ENCODE measurements at regions of chr2 and their contacts with region 1.

Region 1: GRCh38 chr2:171522052-171522787 is at the start of gene CYBRD1:
- DNase-seq: peak; percentile 93
- ATAC-seq: peak; percentile 88
- total RNA-seq, gene CYBRD1: 58.3 TPM

Region 2: GRCh38 chr2:171420728-171421563 is 101.3 kb before region 1 on chr2:
- intact Hi-C with region 1: no loop called
- DNase-seq: no peak
- ATAC-seq: no peak

Region 3: GRCh38 chr2:171433763-171434670 is 88.2 kb before region 1 on chr2 and contains the starts of genes DCAF17 and METTL8:
- intact Hi-C with region 1: loop called (anchors 10 kb)
- DNase-seq: peak; percentile 97
- ATAC-seq: peak; percentile 99
- total RNA-seq, gene DCAF17: 6.5 TPM
- total RNA-seq, gene METTL8: 9.5 TPM